ENCODE measurements at regions of chr16 and their contacts with region 1.

Region 1: GRCh38 chr16:31382485-31383161 is 10.5 kb upstream of the ITGAD start:
- DNase-seq: peak; percentile 35 to 81 (median 66)
- ATAC-seq: peak; percentile 60
- H3K4me3 ChIP-seq: no peak overlapping the region
- H3K4me3 Mint-ChIP-seq: no peak overlapping the region
- H3K27ac ChIP-seq: no peak overlapping the region
- H3K27ac Mint-ChIP-seq: no peak overlapping the region
- H3K4me1 ChIP-seq: peaks cover 1% of the 10 kb centered on the region
- H3K4me1 Mint-ChIP-seq: peaks cover 9% of the 10 kb centered on the region
- H3K27me3 ChIP-seq: no peaks in the 10 kb centered on the region
- H3K27me3 Mint-ChIP-seq: peaks cover 4% of the 10 kb centered on the region
- CTCF ChIP-seq: peak; percentile 72

Region 2: GRCh38 chr16:31371619-31372484 is 10.8 kb before region 1 on chr16:
- CTCF ChIA-PET with region 1: interaction called, 10 read pairs
- POLR2A ChIA-PET with region 1: no interaction called
- intact Hi-C with region 1: no loop called
- DNase-seq: no peak
- ATAC-seq: no peak
- H3K4me3 ChIP-seq: no peak overlapping the region
- H3K4me3 Mint-ChIP-seq: no peak overlapping the region
- H3K27ac ChIP-seq: no peak overlapping the region
- H3K27ac Mint-ChIP-seq: no peak overlapping the region
- H3K4me1 ChIP-seq: no peaks in the 10 kb centered on the region
- H3K4me1 Mint-ChIP-seq: peaks cover 8% of the 10 kb centered on the region
- H3K27me3 ChIP-seq: no peaks in the 10 kb centered on the region
- H3K27me3 Mint-ChIP-seq: no peaks in the 10 kb centered on the region
- CTCF ChIP-seq: no peak

Region 3: GRCh38 chr16:31678649-31679325 is 296.2 kb after region 1 on chr16:
- CTCF ChIA-PET with region 1: no interaction called
- POLR2A ChIA-PET with region 1: no interaction called
- intact Hi-C with region 1: no loop called
- DNase-seq: no peak
- ATAC-seq: no peak
- H3K4me3 ChIP-seq: no peak overlapping the region
- H3K4me3 Mint-ChIP-seq: no peak overlapping the region
- H3K27ac ChIP-seq: no peak overlapping the region
- H3K27ac Mint-ChIP-seq: no peak overlapping the region
- H3K4me1 ChIP-seq: no peaks in the 10 kb centered on the region
- H3K4me1 Mint-ChIP-seq: peaks cover 8% of the 10 kb centered on the region
- H3K27me3 ChIP-seq: no peaks in the 10 kb centered on the region
- H3K27me3 Mint-ChIP-seq: peaks cover 6% of the 10 kb centered on the region
- CTCF ChIP-seq: no peak